Aorta (tissue), 5 donors: ENCODE measurements at regions of chr18 and their contacts with region 1.

Region 1: DNA sequence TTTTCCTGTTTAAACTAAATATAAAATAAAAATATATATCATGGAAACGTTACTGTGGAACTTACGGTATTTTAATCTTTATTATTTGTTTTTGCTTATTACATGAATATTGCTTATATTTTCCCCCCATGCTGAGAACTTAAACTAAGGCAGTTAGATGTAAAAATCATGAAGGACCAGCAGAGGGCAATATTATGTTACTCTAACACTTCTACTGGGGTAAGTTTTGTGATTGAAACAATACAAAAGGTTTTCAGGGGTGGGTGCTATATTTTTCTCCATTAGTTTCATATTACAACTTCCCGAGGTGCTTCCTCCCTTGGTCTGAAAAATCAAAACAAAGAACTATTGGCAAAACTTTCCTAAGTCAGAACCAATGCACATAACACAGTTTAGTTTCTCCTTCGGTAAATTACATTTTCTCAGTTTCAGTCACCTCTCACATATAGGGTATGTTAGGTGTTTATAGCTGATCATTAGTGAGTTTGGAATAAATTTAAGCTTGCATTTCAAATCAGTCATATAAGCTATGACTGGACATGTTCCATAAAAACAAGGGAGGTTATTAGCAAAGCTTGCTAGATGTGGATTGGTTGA is 54.8 kb downstream of the ZNF407 start:
- DNase-seq: no peak
- ATAC-seq: no peak
- H3K4me3 ChIP-seq: no peak overlapping the region
- H3K27ac ChIP-seq: no peak overlapping the region
- H3K4me1 ChIP-seq: no peaks in the 10 kb centered on the region
- H3K27me3 ChIP-seq: no peaks in the 10 kb centered on the region

Region 2: DNA sequence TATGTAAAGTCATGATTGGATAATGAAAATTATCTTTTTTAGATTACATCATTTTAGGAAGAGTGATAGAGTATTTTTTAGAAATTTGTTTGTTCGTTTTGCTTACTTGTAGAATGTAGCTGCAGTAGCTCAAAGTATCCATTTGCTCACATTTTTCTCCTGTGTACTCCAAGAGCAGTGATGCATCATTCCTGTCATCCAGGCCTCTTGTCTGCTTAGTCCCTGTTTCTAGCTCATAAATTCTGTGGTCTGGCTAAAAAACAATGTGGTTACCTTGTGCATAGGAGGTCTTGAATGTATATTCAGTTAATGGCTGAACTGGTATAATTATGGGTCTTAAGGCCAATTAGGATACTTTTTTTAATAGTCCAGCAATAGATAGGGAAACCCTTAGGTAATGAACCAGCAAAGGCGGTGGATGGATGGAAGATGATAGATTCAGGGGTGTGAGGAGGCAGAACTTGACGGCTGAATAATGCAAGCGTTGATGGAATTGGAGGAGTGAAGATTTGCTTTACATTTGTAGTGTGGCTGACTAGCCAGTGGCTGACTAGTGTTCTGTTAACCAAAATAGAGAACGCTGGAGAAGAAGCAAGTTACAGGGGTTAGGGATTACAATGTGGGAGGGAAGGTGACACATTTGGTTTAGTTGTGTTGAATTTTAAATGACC is 90.2 kb after region 1 on chr18:
- intact Hi-C with region 1: no loop called
- DNase-seq: no peak
- ATAC-seq: no peak
- H3K4me3 ChIP-seq: no peak overlapping the region
- H3K27ac ChIP-seq: no peak overlapping the region
- H3K4me1 ChIP-seq: no peaks in the 10 kb centered on the region
- H3K27me3 ChIP-seq: no peaks in the 10 kb centered on the region

Region 3: GRCh38 chr18:75209129-75209950 is 556.9 kb after region 1 on chr18 and contains the start of gene PTGR3:
- intact Hi-C with region 1: loop called in 1 of 2 experiments (anchors 10 kb)
- DNase-seq: peak; percentile 92
- ATAC-seq: peak; percentile 76
- H3K4me3 ChIP-seq: peak within 1 kb of the TSS; percentile 70 to 94
- H3K27ac ChIP-seq: peak within 1 kb of the TSS; percentile 81 to 98
- H3K4me1 ChIP-seq: peaks cover 0 to 4% of the 10 kb centered on the region in 2 donors
- H3K27me3 ChIP-seq: no peaks in the 10 kb centered on the region
- total RNA-seq, gene PTGR3: 16.9 to 28.6 TPM

Region 4: GRCh38 chr18:75478996-75479880 is 826.7 kb after region 1 on chr18:
- intact Hi-C with region 1: loop called (anchors 5 kb)
- DNase-seq: no peak
- ATAC-seq: no peak
- H3K4me3 ChIP-seq: no peak overlapping the region
- H3K27ac ChIP-seq: no peak overlapping the region
- H3K4me1 ChIP-seq: no peaks in the 10 kb centered on the region
- H3K27me3 ChIP-seq: no peaks in the 10 kb centered on the region

Region 5: GRCh38 chr18:76349067-76349715 is 1696.7 kb after region 1 on chr18:
- intact Hi-C with region 1: loop called in 1 of 2 experiments (anchors 5 kb)
- DNase-seq: no peak
- ATAC-seq: peak; percentile 67
- H3K4me3 ChIP-seq: no peak overlapping the region
- H3K27ac ChIP-seq: no peak overlapping the region
- H3K4me1 ChIP-seq: no peaks in the 10 kb centered on the region
- H3K27me3 ChIP-seq: no peaks in the 10 kb centered on the region